Calu3 (cell line): ENCODE measurements at regions of chr2 and their contacts with region 1.

Region 1: DNA sequence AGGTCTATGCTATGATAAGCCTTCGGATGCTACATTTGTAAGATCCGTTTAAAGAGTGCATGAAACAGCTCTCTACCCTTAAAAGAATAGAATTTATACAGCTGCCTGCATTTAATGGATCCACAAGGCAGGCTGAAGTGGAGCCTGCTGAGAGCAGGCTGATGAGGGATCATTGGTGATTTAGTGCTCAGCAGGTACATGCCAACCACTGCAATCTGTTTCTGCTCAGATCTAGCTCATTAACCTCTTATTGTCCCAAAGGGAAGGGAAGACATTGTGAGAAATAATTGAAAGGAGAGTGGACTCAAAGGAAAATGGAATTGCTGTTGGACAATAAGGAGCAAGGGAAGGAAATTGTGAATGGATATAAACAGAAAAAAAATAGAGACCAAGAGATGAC is 822.6 kb downstream of the TRIB2 start:
- DNase-seq: no peak
- H3K4me3 Mint-ChIP-seq: peak overlapping the region; percentile 69
- H3K27ac Mint-ChIP-seq: peak overlapping the region; percentile 23
- H3K4me1 Mint-ChIP-seq: peaks cover 42% of the 10 kb centered on the region
- H3K27me3 Mint-ChIP-seq: no peaks in the 10 kb centered on the region
- CTCF ChIP-seq: no peak

Region 2: DNA sequence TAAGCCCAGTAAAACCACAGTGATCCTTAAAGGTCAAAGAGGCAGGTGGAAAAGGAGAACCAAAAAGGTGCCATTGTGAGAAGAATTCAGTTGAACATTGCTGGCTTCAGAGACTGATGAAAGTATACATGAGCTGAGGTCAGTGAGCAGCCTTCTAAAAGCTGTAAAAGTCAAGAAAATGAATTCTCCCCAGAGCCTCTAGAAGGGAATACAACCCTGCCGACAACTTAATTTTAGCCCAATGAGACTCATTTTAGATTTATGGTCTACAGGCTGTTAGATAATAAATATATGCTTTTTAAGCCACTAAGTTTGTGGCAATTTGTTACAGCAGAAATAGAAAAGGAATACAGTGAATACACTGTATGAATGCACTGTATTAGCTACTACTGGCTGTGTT is 88.8 kb after region 1 on chr2:
- CTCF ChIA-PET with region 1: no interaction called
- intact Hi-C with region 1: no loop called
- DNase-seq: no peak
- H3K4me3 Mint-ChIP-seq: no peak overlapping the region
- H3K27ac Mint-ChIP-seq: no peak overlapping the region
- H3K4me1 Mint-ChIP-seq: no peaks in the 10 kb centered on the region
- H3K27me3 Mint-ChIP-seq: no peaks in the 10 kb centered on the region
- CTCF ChIP-seq: no peak

Region 3: GRCh38 chr2:13698449-13699246 is 159.4 kb after region 1 on chr2:
- CTCF ChIA-PET with region 1: no interaction called
- intact Hi-C with region 1: no loop called
- DNase-seq: no peak
- H3K4me3 Mint-ChIP-seq: no peak overlapping the region
- H3K27ac Mint-ChIP-seq: no peak overlapping the region
- H3K4me1 Mint-ChIP-seq: no peaks in the 10 kb centered on the region
- H3K27me3 Mint-ChIP-seq: no peaks in the 10 kb centered on the region
- CTCF ChIP-seq: no peak

Region 4: GRCh38 chr2:13819896-13820295 is 280.6 kb after region 1 on chr2:
- CTCF ChIA-PET with region 1: no interaction called
- intact Hi-C with region 1: loop called (anchors 10 kb)
- DNase-seq: no peak
- H3K4me3 Mint-ChIP-seq: no peak overlapping the region
- H3K27ac Mint-ChIP-seq: no peak overlapping the region
- H3K4me1 Mint-ChIP-seq: no peaks in the 10 kb centered on the region
- H3K27me3 Mint-ChIP-seq: no peaks in the 10 kb centered on the region
- CTCF ChIP-seq: no peak